Activated CD8-positive, alpha-beta memory T cell treated with anti-CD3 and anti-CD28 coated beads, Interleukin-2, amount 10 ng/mL, durations not matched to agents 7 days and 5 days (primary cell): ENCODE measurements at regions of chr3 and their contacts with region 1.

Region 1: GRCh38 chr3:195522254-195523023 is 20.7 kb downstream of the PPP1R2 start:
- DNase-seq: no peak
- ATAC-seq: peak; percentile 38
- H3K4me3 Mint-ChIP-seq: no peak overlapping the region
- H3K27ac Mint-ChIP-seq: peak overlapping the region; percentile 42
- H3K4me1 Mint-ChIP-seq: peaks cover 32% of the 10 kb centered on the region
- H3K27me3 Mint-ChIP-seq: no peaks in the 10 kb centered on the region

Region 2: GRCh38 chr3:195542698-195543499 is 20.5 kb after region 1 on chr3 and contains the start of gene PPP1R2:
- CTCF ChIA-PET with region 1: interaction called, 23 read pairs
- DNase-seq: peak; percentile 92
- ATAC-seq: peak; percentile 80
- H3K4me3 Mint-ChIP-seq: peak within 1 kb of the TSS; percentile 96
- H3K27ac Mint-ChIP-seq: peak within 1 kb of the TSS; percentile 90
- H3K4me1 Mint-ChIP-seq: peaks cover 72% of the 10 kb centered on the region
- H3K27me3 Mint-ChIP-seq: no peaks in the 10 kb centered on the region
- total RNA-seq, gene PPP1R2: 72.0 to 91.8 TPM

Region 3: DNA sequence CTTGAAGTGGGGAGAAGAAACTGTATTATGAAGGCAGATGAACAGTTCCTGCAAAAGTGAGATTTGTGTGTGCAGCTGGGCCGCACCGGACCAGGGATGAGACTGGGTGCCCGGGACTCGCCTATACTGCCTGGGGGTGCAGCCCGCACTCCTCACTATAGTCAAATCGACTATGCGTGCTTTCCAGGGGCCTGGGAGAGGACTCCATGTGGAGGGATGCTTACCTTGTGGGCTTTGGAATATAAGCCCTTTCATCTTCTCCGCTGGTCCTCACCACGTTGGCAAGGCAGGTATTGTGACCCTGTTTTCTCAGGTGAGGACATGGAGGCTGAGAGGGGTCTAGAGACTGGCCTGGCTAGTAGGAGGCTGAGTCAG is 94.3 kb after region 1 on chr3:
- CTCF ChIA-PET with region 1: no interaction called
- DNase-seq: no peak
- ATAC-seq: no peak
- H3K4me3 Mint-ChIP-seq: no peak overlapping the region
- H3K27ac Mint-ChIP-seq: no peak overlapping the region
- H3K4me1 Mint-ChIP-seq: peaks cover 24% of the 10 kb centered on the region
- H3K27me3 Mint-ChIP-seq: no peaks in the 10 kb centered on the region